Activated CD8-positive, alpha-beta T cell treated with anti-CD3 and anti-CD28 coated beads for 36 hours (primary cell): ENCODE measurements at regions of chr2 and their contacts with region 1.

Region 1: GRCh38 chr2:208072250-208072892 is 47.0 kb upstream of the PLEKHM3 start:
- DNase-seq: peak; percentile 71
- ATAC-seq: peak; percentile 74
- H3K4me3 Mint-ChIP-seq: no peak overlapping the region
- H3K27ac Mint-ChIP-seq: no peak overlapping the region
- H3K4me1 Mint-ChIP-seq: no peaks in the 10 kb centered on the region
- H3K27me3 Mint-ChIP-seq: peaks cover 4% of the 10 kb centered on the region
- CTCF ChIP-seq: peak; percentile 81

Region 2: DNA sequence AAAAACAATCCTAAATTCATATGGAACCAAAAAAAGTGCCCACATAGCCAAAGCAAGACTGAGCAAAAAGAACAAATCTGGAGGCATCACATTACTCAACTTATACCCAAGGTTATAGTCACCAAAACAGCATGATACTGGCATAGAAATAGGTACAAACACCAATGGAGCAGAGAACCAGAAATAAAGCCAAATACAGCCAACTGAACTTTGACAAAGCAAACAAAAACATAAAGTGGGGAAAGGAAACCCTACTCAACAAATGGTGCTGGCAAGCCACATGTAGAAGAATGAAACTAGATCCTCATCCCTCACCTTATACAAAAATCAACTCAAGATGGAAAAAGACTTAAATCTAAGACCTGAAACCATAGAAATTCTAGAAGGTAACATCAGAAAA is 11.4 kb after region 1 on chr2:
- CTCF ChIA-PET with region 1: interaction called, 11 read pairs
- POLR2A ChIA-PET with region 1: no interaction called
- intact Hi-C with region 1: no loop called
- DNase-seq: no peak
- ATAC-seq: no peak
- H3K4me3 Mint-ChIP-seq: no peak overlapping the region
- H3K27ac Mint-ChIP-seq: no peak overlapping the region
- H3K4me1 Mint-ChIP-seq: no peaks in the 10 kb centered on the region
- H3K27me3 Mint-ChIP-seq: peaks cover 5% of the 10 kb centered on the region
- CTCF ChIP-seq: no peak

Region 3: GRCh38 chr2:208118918-208119317 is 46.5 kb after region 1 on chr2:
- CTCF ChIA-PET with region 1: no interaction called
- POLR2A ChIA-PET with region 1: no interaction called
- intact Hi-C with region 1: no loop called
- DNase-seq: no peak
- ATAC-seq: no peak
- H3K4me3 Mint-ChIP-seq: no peak overlapping the region
- H3K27ac Mint-ChIP-seq: no peak overlapping the region
- H3K4me1 Mint-ChIP-seq: peaks cover 1% of the 10 kb centered on the region
- H3K27me3 Mint-ChIP-seq: peaks cover 5% of the 10 kb centered on the region
- CTCF ChIP-seq: no peak